ENCODE measurements at regions of chr9 and their contacts with region 1.

Region 1: DNA sequence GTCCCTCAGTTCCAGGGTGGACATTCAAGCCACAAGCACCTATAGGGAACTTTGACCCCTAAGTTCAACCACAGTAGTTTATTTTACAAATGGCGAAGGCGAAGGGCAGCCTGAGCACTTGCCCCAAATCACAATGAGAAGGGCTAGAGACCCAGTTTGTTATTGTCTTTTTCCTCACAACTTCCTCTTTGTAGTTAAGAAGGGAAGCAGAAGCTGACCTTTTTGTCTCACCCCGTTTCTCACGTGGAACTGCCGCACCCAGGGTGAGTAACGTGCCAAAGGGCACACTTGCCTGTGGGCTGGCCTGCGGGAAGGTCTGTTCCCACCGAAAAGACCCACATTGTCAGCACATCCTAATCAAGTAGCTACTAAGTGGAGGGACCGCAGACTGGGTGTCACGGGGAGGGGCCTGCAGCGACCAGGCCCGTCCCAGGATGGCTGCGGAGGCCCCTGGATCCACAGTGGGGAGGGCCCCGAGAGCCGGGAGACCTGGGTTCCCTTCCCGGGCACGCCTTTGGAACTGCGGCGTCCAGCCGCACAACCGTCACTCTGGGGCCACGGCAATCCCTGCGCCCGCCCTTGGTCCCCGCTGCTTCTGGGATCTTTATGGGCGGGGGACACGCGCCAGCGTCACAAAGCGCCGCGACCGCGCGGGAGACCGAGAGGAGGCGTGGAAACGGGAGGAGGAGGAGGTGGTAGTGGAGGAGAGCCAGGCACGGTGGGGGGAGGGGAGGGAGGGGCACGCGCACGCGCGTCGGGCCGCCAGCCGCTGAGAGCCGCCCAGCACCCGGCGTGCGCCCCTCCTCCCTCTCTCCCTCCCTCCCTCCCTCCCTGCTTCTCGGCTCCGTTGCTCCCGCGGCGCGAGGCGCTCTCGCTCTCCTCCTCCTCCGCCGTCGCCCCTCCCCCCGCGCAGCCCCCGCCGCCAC is at the start of gene UBE2R2:
- DNase-seq: peak; percentile 90
- H3K4me3 Mint-ChIP-seq: peak within 1 kb of the TSS; percentile 93
- H3K27ac Mint-ChIP-seq: peak within 1 kb of the TSS; percentile 98
- H3K4me1 Mint-ChIP-seq: peaks cover 56% of the 10 kb centered on the region
- H3K27me3 Mint-ChIP-seq: peaks cover 5% of the 10 kb centered on the region
- total RNA-seq, gene UBE2R2: 40.0 and 41.0 TPM in 2 replicates

Region 2: DNA sequence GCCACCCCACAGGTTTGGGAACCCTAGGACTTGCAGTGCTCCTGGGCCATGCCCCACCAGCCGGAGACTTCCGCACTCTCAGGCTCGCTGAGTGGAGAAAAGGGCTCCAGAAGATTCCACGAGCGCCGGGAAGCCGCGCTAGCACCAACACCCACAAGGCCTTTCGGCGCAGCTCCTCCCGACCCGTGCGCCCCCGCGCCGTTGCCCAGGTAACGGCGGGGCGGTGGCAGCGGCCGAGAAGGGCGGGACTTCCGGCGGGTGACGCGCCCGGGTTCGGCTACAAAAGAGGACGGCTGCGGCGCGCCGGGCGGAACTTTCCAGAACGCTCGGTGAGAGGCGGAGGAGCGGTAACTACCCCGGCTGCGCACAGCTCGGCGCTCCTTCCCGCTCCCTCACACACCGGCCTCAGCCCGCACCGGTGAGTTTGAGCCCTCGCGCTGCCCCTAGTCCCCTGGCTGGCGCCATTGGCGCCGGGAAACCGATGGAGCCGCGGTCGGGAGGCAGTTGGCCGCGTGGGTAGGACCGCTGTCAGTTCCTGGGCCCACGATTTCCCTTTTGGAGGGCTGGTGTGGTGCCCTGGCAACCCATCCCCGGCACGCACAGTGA is 791.5 kb before region 1 on chr9 and contains the start of gene DNAJA1:
- intact Hi-C with region 1: loop called (anchors 5 kb)
- DNase-seq: peak; percentile 95
- H3K4me3 Mint-ChIP-seq: peak within 1 kb of the TSS; percentile 94
- H3K27ac Mint-ChIP-seq: peak within 1 kb of the TSS; percentile 98
- H3K4me1 Mint-ChIP-seq: peaks cover 68% of the 10 kb centered on the region
- H3K27me3 Mint-ChIP-seq: no peaks in the 10 kb centered on the region
- total RNA-seq, gene DNAJA1: 296 and 312 TPM in 2 replicates

Region 3: DNA sequence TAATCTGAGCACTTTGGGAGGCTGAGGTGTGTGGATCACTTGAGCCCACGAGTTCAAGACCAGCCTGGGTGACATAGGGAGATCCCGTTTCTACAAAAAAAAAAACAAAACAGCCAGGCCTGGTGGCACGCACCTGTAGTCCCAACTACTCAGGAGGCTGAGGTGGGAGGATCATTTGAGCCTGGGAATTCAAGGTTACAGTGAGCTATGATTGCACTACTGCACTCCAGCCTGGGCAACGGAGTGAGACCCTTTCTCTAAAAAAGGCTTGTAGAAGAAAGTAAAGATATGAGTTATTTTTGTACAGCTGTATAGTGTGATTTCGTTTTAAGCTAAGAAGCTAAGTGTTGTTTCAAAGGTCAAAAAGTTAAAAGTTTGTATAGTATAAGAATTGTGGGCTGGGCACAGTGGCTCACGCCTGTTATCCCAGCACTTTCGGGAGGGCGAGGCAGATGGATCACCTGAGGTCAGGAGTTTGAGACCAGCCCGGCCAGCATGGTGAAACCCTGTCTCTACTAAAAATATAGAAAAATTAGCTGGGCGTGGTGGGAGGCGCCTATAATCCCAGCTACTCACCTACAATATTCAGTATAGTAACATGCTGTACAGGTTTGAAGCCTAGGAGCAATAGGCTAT is 19.2 kb after region 1 on chr9:
- intact Hi-C with region 1: loop called (anchors 1 kb)
- DNase-seq: no peak
- H3K4me3 Mint-ChIP-seq: no peak overlapping the region
- H3K27ac Mint-ChIP-seq: peak overlapping the region; percentile 40
- H3K4me1 Mint-ChIP-seq: peaks cover 21% of the 10 kb centered on the region
- H3K27me3 Mint-ChIP-seq: no peaks in the 10 kb centered on the region

Region 4: GRCh38 chr9:33881635-33882034 is 65.0 kb after region 1 on chr9:
- intact Hi-C with region 1: loop called (anchors 1 kb)
- DNase-seq: no peak
- H3K4me3 Mint-ChIP-seq: peak overlapping the region; percentile 45
- H3K27ac Mint-ChIP-seq: peak overlapping the region; percentile 91
- H3K4me1 Mint-ChIP-seq: peaks cover 36% of the 10 kb centered on the region
- H3K27me3 Mint-ChIP-seq: no peaks in the 10 kb centered on the region

Region 5: DNA sequence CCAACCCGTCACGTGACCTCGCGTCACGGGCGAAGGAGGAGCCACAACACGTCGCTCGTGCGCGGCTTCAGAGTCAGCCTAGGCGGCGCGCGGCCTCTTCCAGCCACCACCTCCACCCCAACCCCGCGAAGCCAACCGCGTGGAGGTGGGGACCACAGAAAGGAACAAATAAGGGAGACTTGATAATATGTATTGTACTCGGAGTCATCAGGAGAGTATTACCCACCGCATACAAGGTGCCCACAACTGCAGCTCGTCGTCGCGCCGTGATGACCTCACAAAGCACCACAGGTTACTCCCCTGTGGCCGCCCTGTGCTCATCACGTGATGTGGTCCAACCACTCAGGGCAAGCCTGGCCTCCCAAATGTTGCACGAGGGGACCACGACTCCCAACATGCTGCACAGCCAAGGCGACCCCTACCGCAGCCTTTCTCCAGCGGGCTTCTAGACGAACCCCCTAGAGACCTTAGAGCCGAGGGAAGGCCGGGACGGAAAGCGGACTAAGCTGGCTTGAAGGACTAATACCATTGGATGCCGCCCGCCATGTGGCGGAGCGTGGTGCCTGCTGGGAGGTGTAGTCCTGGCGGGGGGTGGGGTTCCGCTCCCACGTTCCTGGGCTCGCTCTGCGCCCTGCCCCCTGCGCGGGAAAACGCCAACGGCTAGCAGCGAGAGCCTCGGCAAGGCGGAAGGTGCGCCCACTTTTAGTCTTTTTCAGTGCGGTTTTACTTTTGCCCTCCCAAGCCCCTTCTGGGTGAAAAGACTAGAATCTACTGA is 232.5 kb after region 1 on chr9:
- intact Hi-C with region 1: loop called (anchors 1 kb)
- DNase-seq: peak; percentile 94
- H3K4me3 Mint-ChIP-seq: peak overlapping the region; percentile 98
- H3K27ac Mint-ChIP-seq: peak overlapping the region; percentile 100
- H3K4me1 Mint-ChIP-seq: peaks cover 44% of the 10 kb centered on the region
- H3K27me3 Mint-ChIP-seq: no peaks in the 10 kb centered on the region

Region 6: DNA sequence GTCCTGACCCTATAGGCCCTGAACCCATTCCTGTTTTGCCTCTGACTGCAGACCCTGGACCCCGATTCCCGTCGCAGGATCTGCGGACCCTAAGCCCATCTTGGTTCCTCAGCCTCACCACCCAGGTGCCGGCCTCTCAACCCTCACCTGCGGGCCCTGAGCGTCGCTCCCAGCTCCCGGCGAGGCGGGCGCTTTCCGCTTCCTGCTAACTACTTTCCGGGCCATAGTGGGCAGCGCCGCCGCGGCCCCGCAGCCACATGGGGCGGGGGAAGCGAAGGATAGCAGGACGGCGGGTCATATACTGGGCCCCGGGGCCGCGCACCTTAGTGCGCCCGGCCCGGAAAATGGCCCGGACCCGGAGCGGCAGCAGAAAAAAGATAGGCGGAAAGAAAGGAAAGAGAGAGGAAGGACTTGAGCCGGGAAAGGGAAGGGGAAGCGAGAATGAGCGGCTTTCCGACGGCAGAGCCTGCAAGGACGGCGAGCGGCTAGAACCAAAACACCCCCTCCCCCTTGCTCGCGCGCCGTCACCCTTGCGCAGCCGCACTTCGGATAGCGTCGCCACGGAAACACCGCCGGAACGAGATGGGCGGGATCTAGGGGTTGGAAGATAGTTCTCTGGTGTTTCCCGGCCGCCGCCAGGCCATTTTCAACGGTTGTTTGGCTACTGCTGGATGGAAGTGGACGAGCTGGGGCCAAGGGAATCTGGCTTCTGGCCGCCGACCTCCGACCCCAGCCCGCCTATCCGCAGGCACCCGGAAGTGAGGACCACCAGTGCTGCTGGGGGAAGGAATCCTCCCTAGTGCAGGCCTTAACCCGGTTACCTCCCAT is 309.8 kb after region 1 on chr9 and contains the start of gene DCAF12:
- intact Hi-C with region 1: loop called (anchors 1 kb)
- DNase-seq: peak; percentile 89
- H3K4me3 Mint-ChIP-seq: peak within 1 kb of the TSS; percentile 96
- H3K27ac Mint-ChIP-seq: peak within 1 kb of the TSS; percentile 96
- H3K4me1 Mint-ChIP-seq: peaks cover 43% of the 10 kb centered on the region
- H3K27me3 Mint-ChIP-seq: no peaks in the 10 kb centered on the region
- total RNA-seq, gene DCAF12: 49.7 and 52.8 TPM in 2 replicates

Region 7: GRCh38 chr9:34376596-34377403 is 560.2 kb after region 1 on chr9 and contains the start of gene MYORG:
- intact Hi-C with region 1: loop called (anchors 2 kb)
- DNase-seq: peak; percentile 97
- H3K4me3 Mint-ChIP-seq: peak within 1 kb of the TSS; percentile 88
- H3K27ac Mint-ChIP-seq: peak within 1 kb of the TSS; percentile 32
- H3K4me1 Mint-ChIP-seq: peaks cover 45% of the 10 kb centered on the region
- H3K27me3 Mint-ChIP-seq: peaks cover 13% of the 10 kb centered on the region
- total RNA-seq, gene MYORG: 1.0 and 1.9 TPM in 2 replicates